Panc1 (cell line): ENCODE measurements at regions of chr2 and their contacts with region 1.

Region 1: GRCh38 chr2:172588931-172589330 is 33.0 kb downstream of the PDK1 start:
- DNase-seq: no peak
- ATAC-seq: no peak
- H3K4me3 ChIP-seq: no peak overlapping the region
- H3K27ac ChIP-seq: no peak overlapping the region
- H3K4me1 ChIP-seq: no peaks in the 10 kb centered on the region
- H3K27me3 ChIP-seq: no peaks in the 10 kb centered on the region
- CTCF ChIP-seq: no peak

Region 2: GRCh38 chr2:172270278-172271079 is 318.5 kb before region 1 on chr2:
- CTCF ChIA-PET with region 1: no interaction called
- POLR2A ChIA-PET with region 1: no interaction called
- in situ Hi-C with region 1: no loop called
- intact Hi-C with region 1: no loop called
- DNase-seq: no peak
- ATAC-seq: no peak
- H3K4me3 ChIP-seq: no peak overlapping the region
- H3K27ac ChIP-seq: no peak overlapping the region
- H3K4me1 ChIP-seq: no peaks in the 10 kb centered on the region
- H3K27me3 ChIP-seq: no peaks in the 10 kb centered on the region; the same call in 1 of the 2 replicates
- CTCF ChIP-seq: no peak

Region 3: DNA sequence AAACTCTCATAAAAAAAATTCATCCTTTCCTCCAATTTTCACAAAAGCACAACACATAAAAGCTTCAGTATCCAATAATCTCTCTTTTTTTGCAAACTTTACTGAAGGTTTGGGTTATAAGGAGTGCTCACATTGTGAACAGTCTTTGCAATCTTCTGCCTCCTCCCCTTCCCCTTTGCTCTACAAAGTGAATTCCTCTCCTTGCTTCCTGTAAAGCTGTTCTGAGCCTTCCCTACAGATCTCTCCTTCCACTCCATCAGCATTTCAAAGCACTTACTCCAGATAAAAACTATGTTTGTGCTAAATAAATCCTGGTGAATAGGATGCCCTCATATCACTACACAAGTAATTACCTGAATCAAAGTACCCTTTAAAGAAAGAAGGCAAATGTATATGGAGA is 37.7 kb before region 1 on chr2:
- CTCF ChIA-PET with region 1: no interaction called
- POLR2A ChIA-PET with region 1: no interaction called
- in situ Hi-C with region 1: no loop called
- intact Hi-C with region 1: no loop called
- DNase-seq: no peak
- ATAC-seq: no peak
- H3K4me3 ChIP-seq: no peak overlapping the region
- H3K27ac ChIP-seq: peak overlapping the region; percentile 34; the same call in 1 of the 2 replicates
- H3K4me1 ChIP-seq: peaks cover 10% of the 10 kb centered on the region
- H3K27me3 ChIP-seq: no peaks in the 10 kb centered on the region
- CTCF ChIP-seq: no peak

Region 4: DNA sequence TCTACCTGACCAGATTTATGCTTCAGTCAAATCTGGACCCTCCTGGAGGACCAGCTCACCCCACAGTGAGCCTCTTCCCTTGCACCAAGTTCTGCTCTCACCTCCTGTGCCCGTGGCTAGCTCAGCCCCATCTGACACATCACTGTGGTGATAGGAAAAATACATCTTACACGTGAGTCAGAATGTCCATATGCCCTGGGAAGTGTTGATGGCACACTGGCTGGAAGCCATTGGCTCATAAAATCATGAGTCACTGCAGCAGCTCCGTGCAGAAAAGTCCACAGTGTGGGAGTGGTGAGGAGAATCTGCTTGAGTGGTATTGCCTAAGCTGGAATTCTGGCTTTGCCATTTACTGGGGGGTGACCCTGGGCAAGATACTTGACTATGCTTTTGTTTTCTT is 104.1 kb after region 1 on chr2:
- CTCF ChIA-PET with region 1: no interaction called
- POLR2A ChIA-PET with region 1: no interaction called
- in situ Hi-C with region 1: no loop called
- intact Hi-C with region 1: no loop called
- DNase-seq: peak; percentile 94
- ATAC-seq: peak; percentile 97
- H3K4me3 ChIP-seq: no peak overlapping the region
- H3K27ac ChIP-seq: peak overlapping the region; percentile 65
- H3K4me1 ChIP-seq: peaks cover 26% of the 10 kb centered on the region
- H3K27me3 ChIP-seq: no peaks in the 10 kb centered on the region
- CTCF ChIP-seq: no peak

Region 5: GRCh38 chr2:172710584-172711024 is 121.7 kb after region 1 on chr2:
- CTCF ChIA-PET with region 1: interaction called, 3 read pairs
- POLR2A ChIA-PET with region 1: no interaction called
- in situ Hi-C with region 1: no loop called
- intact Hi-C with region 1: loop called (anchors 2 kb)
- DNase-seq: no peak
- ATAC-seq: peak; percentile 85
- H3K4me3 ChIP-seq: no peak overlapping the region
- H3K27ac ChIP-seq: no peak overlapping the region
- H3K4me1 ChIP-seq: peaks cover 5% of the 10 kb centered on the region; the same call in 1 of the 2 replicates
- H3K27me3 ChIP-seq: no peaks in the 10 kb centered on the region
- CTCF ChIP-seq: peak; percentile 86

Region 6: GRCh38 chr2:172735582-172736423 is 146.9 kb after region 1 on chr2 and contains the start of gene RAPGEF4:
- CTCF ChIA-PET with region 1: no interaction called
- POLR2A ChIA-PET with region 1: no interaction called
- in situ Hi-C with region 1: no loop called
- intact Hi-C with region 1: no loop called
- DNase-seq: no peak
- ATAC-seq: peak; percentile 62
- H3K4me3 ChIP-seq: peak within 1 kb of the TSS; percentile 35 to 37
- H3K27ac ChIP-seq: no peak within 1 kb of the TSS
- H3K4me1 ChIP-seq: peaks cover 4% of the 10 kb centered on the region; the same call in 1 of the 2 replicates
- H3K27me3 ChIP-seq: peaks cover 45% of the 10 kb centered on the region
- CTCF ChIP-seq: no peak
- total RNA-seq, gene RAPGEF4: 0.62 TPM